ENCODE measurements at regions of chr5 and their contacts with region 1.

Region 1: GRCh38 chr5:67010684-67011409 is 185.8 kb downstream of the CD180 start:
- DNase-seq: peak; percentile 94
- ATAC-seq: peak; percentile 70
- H3K4me3 ChIP-seq: peak overlapping the region; percentile 60
- H3K27ac ChIP-seq: peak overlapping the region; percentile 100
- H3K4me1 ChIP-seq: peaks cover 91% of the 10 kb centered on the region
- H3K27me3 ChIP-seq: no peaks in the 10 kb centered on the region
- CTCF ChIP-seq: no peak

Region 2: GRCh38 chr5:66958980-66959641 is 51.7 kb before region 1 on chr5:
- CTCF ChIA-PET with region 1: no interaction called
- POLR2A ChIA-PET with region 1: no interaction called
- intact Hi-C with region 1: loop called (anchors 2 kb)
- DNase-seq: peak; percentile 45
- ATAC-seq: peak; percentile 54
- H3K4me3 ChIP-seq: peak overlapping the region; percentile 60
- H3K27ac ChIP-seq: peak overlapping the region; percentile 55
- H3K4me1 ChIP-seq: peaks cover 47% of the 10 kb centered on the region
- H3K27me3 ChIP-seq: no peaks in the 10 kb centered on the region
- CTCF ChIP-seq: no peak

Region 3: DNA sequence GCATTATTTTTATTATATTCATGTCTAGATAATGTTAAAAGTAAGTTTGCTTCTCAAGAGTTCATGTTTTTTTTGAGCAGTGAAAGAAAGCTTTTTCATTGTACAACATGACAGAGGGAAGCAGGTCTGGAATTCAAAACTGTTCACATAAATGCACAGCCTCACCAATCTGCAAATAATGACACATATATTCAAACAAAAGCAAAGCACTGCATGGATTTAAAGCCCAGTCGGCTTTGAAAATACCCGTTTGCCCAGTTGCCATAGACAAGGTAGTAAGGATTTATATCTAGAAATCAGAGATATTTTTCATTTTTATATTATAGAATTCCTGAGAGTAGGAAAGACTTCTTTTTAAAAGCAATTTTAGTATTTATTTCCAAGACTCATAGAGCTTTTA is 16.0 kb before region 1 on chr5:
- CTCF ChIA-PET with region 1: no interaction called
- POLR2A ChIA-PET with region 1: no interaction called
- intact Hi-C with region 1: loop called (anchors 2 kb)
- DNase-seq: peak; percentile 79
- ATAC-seq: peak; percentile 93
- H3K4me3 ChIP-seq: 0 out of 2 replicates have a peak overlapping the region, but pooled peaks have one; percentile 11
- H3K27ac ChIP-seq: peak overlapping the region; percentile 47
- H3K4me1 ChIP-seq: peaks cover 22% of the 10 kb centered on the region
- H3K27me3 ChIP-seq: no peaks in the 10 kb centered on the region
- CTCF ChIP-seq: no peak

Region 4: DNA sequence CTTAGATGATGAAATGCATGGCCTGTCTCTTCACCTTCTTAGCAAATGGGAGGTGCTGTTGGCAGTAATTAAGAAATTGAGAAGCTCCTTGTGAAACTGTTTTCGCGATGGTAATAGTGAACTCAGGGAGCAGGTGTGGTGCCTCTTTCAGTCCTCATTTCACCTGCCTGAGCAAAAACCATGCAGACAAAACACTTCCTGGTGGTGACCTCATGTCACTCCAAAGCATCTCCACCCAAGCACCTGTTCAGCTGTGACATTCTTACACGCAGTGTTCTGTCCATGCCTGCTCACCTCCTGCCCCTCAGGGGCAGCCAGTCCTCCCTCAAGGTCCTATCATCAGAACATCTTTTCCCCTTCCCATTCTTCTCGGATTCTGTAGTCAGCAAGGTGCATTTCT is 39.3 kb after region 1 on chr5:
- CTCF ChIA-PET with region 1: no interaction called
- POLR2A ChIA-PET with region 1: no interaction called
- intact Hi-C with region 1: loop called (anchors 5 kb)
- DNase-seq: no peak
- ATAC-seq: no peak
- H3K4me3 ChIP-seq: no peak overlapping the region
- H3K27ac ChIP-seq: no peak overlapping the region
- H3K4me1 ChIP-seq: peaks cover 10% of the 10 kb centered on the region
- H3K27me3 ChIP-seq: no peaks in the 10 kb centered on the region
- CTCF ChIP-seq: no peak

Region 5: DNA sequence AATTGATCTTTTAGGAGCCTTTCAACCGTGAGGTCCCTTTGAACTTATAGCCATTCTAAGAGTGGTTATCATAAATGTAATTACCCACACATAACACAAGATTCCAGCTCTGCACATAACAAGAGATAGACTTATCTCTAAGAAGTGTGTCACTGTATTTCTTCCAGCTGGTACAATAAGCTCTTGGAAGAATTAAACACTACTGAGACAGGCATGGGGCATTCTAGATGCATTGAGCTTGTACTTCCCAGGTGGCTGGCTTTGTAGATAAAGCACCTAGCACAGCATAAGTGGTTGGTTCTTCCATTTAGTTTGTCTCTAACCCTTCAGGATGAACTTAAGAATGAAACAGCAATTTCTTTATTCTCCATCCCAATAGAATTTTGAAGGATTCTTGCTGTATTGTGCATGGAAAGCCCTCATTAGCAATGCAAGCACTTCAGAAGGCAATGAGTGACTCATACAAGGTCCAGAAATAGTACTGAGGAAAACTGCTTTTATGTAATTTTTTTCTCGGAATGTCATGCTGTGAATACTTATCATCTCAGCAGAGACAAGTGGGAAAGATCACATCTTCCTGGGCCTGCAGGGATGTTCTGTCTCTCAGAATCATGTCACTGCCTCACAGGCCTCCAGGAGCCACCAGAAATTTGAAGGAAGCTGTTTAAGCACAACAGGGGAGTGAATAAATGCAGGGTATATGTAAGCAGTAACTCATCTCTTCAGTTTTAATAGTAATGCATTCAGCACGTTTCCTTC is 276.8 kb after region 1 on chr5:
- CTCF ChIA-PET with region 1: no interaction called
- POLR2A ChIA-PET with region 1: no interaction called
- intact Hi-C with region 1: no loop called
- DNase-seq: no peak
- ATAC-seq: no peak
- H3K4me3 ChIP-seq: no peak overlapping the region
- H3K27ac ChIP-seq: no peak overlapping the region
- H3K4me1 ChIP-seq: no peaks in the 10 kb centered on the region
- H3K27me3 ChIP-seq: no peaks in the 10 kb centered on the region
- CTCF ChIP-seq: no peak